ENCODE measurements at regions of chr9 and their contacts with region 1.

Region 1: GRCh38 chr9:113401027-113401792 is at the start of gene ALAD:
- DNase-seq: peak; percentile 100
- H3K4me3 ChIP-seq: peak within 1 kb of the TSS; percentile 85 to 98
- H3K27ac ChIP-seq: peak within 1 kb of the TSS; percentile 46 to 62; a peak in 3 of 4 replicates
- H3K4me1 ChIP-seq: peaks cover 8 to 10% of the 10 kb centered on the region in 2 experiments; a peak in 1 of 4 replicates
- H3K27me3 ChIP-seq: no peaks in the 10 kb centered on the region
- CTCF ChIP-seq: peak; percentile 93
- EP300 ChIP-seq: no peak
- RAD21 ChIP-seq: peak; percentile 69
- polyA plus RNA-seq, gene ALAD: 10.7 and 11.8 TPM in 2 replicates

Region 2: DNA sequence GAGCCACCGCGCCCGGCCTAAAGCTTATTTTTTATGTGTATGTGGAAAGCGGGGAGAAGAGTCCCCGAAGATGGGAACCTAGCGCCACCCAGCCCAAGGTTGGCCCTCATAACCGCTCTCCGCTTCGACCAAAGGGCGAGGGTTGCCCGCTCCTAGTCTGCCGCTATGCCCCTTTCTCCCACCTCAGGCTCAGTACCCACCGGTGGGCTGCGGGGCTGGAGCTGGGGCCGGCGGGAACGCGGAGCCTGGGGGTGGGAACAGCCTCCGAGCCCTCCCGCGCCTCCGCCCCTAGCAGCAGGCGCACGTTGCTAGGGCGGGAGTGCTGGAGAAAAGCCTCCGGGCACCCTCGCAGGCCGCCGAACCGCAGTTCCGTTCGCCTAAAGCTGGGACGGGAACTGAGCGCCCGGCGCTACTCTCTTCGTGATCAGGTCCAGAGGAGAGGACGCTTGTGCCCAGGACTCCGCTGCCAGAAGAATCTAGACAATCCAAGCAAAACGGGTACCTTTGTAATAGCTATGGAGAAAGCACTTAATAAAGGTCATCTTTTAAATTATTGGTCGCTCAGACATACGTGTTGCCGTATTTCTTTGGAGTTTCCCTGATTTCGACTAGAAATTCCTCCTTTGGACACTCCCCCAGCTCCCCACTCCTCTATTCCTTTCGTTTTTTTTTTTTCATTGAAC is 61.1 kb before region 1 on chr9 and contains the start of gene WDR31:
- CTCF ChIA-PET with region 1: interaction called, 11 read pairs
- POLR2A ChIA-PET with region 1: interaction called, 4 read pairs
- DNase-seq: peak; percentile 95
- H3K4me3 ChIP-seq: peak within 1 kb of the TSS; percentile 57 to 90
- H3K27ac ChIP-seq: peak within 1 kb of the TSS; percentile 69 to 74
- H3K4me1 ChIP-seq: peaks cover 0 to 19% of the 10 kb centered on the region in 2 experiments; a peak in 3 of 4 replicates
- H3K27me3 ChIP-seq: no peaks in the 10 kb centered on the region
- CTCF ChIP-seq: no peak
- EP300 ChIP-seq: peak; percentile 35 to 45; a peak in 2 of 4 replicates
- RAD21 ChIP-seq: no peak; the same call in 1 of the 2 replicates
- polyA plus RNA-seq, gene WDR31: 0.74 and 1.3 TPM in 2 replicates

Measured in SK-N-SH (cell line).